Activated B cell treated with CpG ODN at 0.5 μM for 24 hours (primary cell): ENCODE measurements at regions of chr14 and their contacts with region 1.

Region 1: DNA sequence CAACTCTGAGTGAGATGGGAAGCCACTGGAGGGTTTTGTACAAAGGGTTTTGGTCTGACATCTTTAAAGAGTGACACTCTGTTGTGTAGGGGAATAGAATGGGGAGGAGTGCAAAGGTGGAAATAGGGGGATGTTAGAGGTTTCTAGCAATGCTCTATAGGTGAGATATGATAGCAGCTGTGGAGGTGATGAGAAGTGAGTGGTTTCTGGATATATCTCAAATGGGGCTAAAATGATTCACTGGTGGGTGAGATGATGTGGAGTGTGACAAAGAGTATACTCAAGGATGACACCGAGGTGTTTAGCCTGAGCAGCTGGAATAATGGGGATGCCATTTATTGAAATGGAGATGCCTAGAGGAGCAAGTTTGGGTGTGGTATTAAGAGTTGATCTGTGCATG is 426.4 kb downstream of the PCNX1 start:
- DNase-seq: no peak
- ATAC-seq: no peak
- H3K4me3 Mint-ChIP-seq: no peak overlapping the region
- H3K27ac Mint-ChIP-seq: peak overlapping the region; percentile 9
- H3K4me1 Mint-ChIP-seq: peaks cover 78% of the 10 kb centered on the region
- H3K27me3 Mint-ChIP-seq: no peaks in the 10 kb centered on the region
- CTCF ChIP-seq: no peak

Region 2: GRCh38 chr14:71346685-71347084 is 13.0 kb after region 1 on chr14:
- CTCF ChIA-PET with region 1: interaction called, 4 read pairs
- POLR2A ChIA-PET with region 1: interaction called, 6 read pairs
- intact Hi-C with region 1: loop called (anchors 2 kb)
- DNase-seq: no peak
- ATAC-seq: peak; percentile 46
- H3K4me3 Mint-ChIP-seq: peak overlapping the region; percentile 22
- H3K27ac Mint-ChIP-seq: peak overlapping the region; percentile 51
- H3K4me1 Mint-ChIP-seq: peaks cover 87% of the 10 kb centered on the region
- H3K27me3 Mint-ChIP-seq: no peaks in the 10 kb centered on the region
- CTCF ChIP-seq: no peak